Activated naive CD4-positive, alpha-beta T cell treated with anti-CD3 and anti-CD28 coated beads for 36 hours (primary cell): ENCODE measurements at regions of chr2 and their contacts with region 1.

Region 1: DNA sequence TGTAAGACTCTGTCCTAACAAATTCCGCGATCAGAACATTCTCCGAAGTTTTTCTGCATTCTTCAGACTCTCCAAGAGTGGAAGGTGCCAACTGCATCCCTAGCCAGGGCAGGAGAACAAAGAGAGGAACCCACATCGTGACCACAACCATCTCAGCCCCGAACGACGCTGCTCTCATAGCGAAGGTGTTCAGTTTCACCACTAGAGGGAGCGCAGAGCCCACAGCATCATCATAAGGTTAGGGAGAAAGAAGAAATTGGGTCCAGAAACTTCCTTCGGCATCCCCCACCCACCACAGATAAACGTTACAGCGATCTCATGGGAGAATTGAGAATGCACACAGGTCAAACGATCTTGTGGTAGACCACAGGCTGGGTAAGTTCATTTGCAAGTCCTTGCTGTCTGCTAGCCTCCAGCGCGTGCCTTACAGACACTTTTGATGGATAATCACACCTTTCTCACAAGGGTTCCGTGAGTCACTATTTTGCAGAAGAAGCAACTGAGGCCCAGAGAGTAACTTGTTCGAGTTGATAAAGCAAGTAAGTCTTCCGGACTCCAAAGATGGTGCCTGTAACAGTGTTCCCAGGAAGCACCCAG is 53.7 kb upstream of the ARL4C start:
- DNase-seq: peak; percentile 76
- H3K4me3 Mint-ChIP-seq: no peak overlapping the region
- H3K27ac Mint-ChIP-seq: no peak overlapping the region
- H3K4me1 Mint-ChIP-seq: peaks cover 2% of the 10 kb centered on the region
- H3K27me3 Mint-ChIP-seq: peaks cover 6% of the 10 kb centered on the region

Region 2: DNA sequence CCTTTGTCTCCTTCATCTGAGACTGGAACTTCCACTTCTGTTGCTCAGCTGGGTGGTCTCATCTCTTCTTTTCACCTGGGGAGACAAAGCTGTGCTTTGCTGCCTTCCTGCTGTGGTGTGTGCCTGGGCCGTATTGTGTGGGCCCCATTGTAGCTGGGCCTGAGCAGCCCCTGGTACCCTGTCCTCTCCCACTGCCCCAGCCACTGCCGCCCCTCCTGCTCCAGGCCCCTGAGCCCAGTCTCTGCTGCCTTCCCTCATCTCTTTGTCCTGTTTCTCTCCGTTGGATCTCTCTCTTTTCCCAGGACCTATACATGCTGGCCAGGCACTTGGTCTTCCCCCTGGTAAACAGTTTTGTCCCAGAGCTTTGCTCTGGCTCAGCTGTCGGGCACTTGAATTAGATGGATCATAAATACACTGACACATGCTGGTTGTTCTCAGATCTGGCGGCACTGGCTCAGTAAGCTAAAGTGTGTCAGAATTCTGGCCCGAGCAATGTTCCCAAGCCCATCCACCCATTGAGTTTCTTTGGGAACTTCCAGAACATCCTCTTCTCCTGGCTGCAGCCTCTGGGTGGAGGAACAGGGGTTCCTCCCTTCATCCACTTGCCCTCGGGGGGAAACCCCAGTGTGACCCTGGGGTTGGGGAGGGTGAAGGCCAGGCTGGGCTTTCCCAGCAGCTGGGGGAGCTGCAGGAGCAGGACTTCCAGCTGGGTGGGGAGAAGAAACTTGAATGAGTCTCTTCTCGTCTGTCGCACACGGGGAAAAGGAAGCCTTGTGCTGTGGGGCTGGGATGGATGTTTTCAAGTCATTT is 1097.3 kb before region 1 on chr2:
- CTCF ChIA-PET with region 1: no interaction called
- intact Hi-C with region 1: no loop called
- DNase-seq: no peak
- H3K4me3 Mint-ChIP-seq: no peak overlapping the region
- H3K27ac Mint-ChIP-seq: no peak overlapping the region
- H3K4me1 Mint-ChIP-seq: no peaks in the 10 kb centered on the region
- H3K27me3 Mint-ChIP-seq: no peaks in the 10 kb centered on the region

Region 3: DNA sequence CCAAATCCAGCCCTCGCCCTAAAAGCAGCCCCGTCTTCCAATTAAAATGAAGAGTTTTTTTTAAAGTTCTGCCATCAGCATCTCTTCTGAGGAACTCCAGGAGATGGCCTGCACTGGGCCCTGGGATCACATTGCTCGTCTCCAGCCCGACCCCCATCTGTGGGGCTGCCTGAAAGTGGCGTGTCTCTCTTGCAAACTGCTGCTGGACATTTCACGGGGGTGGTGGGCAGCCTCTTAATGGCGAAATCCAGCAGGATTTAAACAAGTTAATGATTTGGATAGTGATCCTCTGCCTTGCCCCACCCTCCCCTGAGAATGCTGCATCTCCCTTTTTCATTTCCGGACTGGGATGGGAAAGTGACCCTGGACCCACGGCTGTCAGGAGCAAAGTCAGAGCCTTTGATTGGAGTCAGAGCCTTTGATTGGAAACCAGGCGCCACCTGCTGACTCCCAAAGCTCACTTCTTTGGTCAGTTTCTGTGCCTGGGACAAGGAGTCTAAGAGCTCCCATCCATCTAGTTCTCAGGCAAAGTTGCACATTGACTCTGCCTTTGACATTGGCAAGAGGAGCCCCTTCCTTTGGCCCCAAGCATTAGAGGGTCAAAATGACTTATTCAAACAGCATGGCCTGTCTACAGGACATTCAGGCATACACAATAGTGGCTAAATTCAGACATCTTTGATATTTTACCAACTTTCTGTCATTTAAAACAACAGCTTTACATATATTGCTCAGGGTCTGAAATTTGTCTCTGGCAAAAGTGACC is 556.4 kb after region 1 on chr2:
- CTCF ChIA-PET with region 1: interaction called, 3 read pairs
- intact Hi-C with region 1: loop called (anchors 1 kb)
- DNase-seq: peak; percentile 49
- H3K4me3 Mint-ChIP-seq: no peak overlapping the region
- H3K27ac Mint-ChIP-seq: no peak overlapping the region
- H3K4me1 Mint-ChIP-seq: no peaks in the 10 kb centered on the region
- H3K27me3 Mint-ChIP-seq: peaks cover 7% of the 10 kb centered on the region

Region 4: GRCh38 chr2:235116885-235117492 is 566.4 kb after region 1 on chr2:
- CTCF ChIA-PET with region 1: interaction called, 4 read pairs
- intact Hi-C with region 1: loop called (anchors 1 kb)
- DNase-seq: no peak
- H3K4me3 Mint-ChIP-seq: no peak overlapping the region
- H3K27ac Mint-ChIP-seq: no peak overlapping the region
- H3K4me1 Mint-ChIP-seq: no peaks in the 10 kb centered on the region
- H3K27me3 Mint-ChIP-seq: peaks cover 13% of the 10 kb centered on the region

Region 5: GRCh38 chr2:235595422-235596010 is 1044.9 kb after region 1 on chr2:
- CTCF ChIA-PET with region 1: no interaction called
- intact Hi-C with region 1: loop called (anchors 2 kb)
- DNase-seq: peak; percentile 64
- H3K4me3 Mint-ChIP-seq: no peak overlapping the region
- H3K27ac Mint-ChIP-seq: no peak overlapping the region
- H3K4me1 Mint-ChIP-seq: no peaks in the 10 kb centered on the region
- H3K27me3 Mint-ChIP-seq: peaks cover 10% of the 10 kb centered on the region

Region 6: DNA sequence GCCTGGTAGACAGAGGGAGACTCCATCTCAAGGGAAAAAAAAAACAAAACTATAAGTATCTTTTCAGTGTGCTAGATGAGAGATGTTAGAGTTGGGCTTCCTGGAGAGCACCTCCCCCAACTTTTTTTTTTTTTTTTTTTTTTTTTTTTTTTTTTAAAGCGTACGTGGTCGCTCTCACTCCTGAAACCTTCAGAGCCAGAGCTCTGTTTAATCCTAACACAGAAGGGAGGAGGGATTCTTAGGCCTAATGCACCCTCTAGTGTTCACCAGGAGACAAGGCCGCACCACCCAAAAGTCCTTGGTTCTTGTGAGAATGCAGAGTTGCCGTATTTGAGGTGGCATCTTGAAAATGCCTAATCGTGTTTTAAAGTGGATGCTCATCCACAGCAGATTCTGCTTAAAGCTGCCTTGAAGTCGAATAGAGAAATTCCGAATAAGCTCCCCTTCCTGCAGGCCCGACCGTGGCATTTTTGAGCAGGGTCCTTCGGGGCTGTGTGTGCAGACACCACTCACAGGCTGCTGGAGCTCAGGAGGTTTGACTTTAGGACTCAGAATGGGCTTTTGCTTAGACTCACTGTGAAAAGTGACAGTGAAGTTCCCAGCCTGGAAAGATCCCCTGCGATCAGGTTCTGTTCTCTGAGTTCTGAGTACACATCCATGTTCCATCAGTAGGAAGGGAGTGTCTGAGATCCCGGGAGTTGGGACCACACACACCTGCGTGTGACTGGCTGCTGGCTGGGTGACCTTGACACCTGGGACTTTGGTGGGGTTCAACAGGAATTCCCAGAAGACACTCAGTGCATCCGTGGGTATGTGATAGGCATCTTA is 1195.9 kb after region 1 on chr2:
- CTCF ChIA-PET with region 1: interaction called, 5 read pairs
- intact Hi-C with region 1: loop called (anchors 1 kb)
- DNase-seq: peak; percentile 75
- H3K4me3 Mint-ChIP-seq: no peak overlapping the region
- H3K27ac Mint-ChIP-seq: no peak overlapping the region
- H3K4me1 Mint-ChIP-seq: no peaks in the 10 kb centered on the region
- H3K27me3 Mint-ChIP-seq: peaks cover 9% of the 10 kb centered on the region